Activated T-helper 1 cell treated with anti-CD3 and anti-CD28 coated beads, Interleukin-12 subunit alpha, Interleukin-12 subunit beta, Interleukin-2, Interleukin-4 antibody, amounts not matched to agents 30 ng/mL and 10 ng/mL and 1 ng/mL, durations not matched to agents 14 hours and 24 hours and 36 hours (primary cell): ENCODE measurements at regions of chr7 and their contacts with region 1.

Region 1: DNA sequence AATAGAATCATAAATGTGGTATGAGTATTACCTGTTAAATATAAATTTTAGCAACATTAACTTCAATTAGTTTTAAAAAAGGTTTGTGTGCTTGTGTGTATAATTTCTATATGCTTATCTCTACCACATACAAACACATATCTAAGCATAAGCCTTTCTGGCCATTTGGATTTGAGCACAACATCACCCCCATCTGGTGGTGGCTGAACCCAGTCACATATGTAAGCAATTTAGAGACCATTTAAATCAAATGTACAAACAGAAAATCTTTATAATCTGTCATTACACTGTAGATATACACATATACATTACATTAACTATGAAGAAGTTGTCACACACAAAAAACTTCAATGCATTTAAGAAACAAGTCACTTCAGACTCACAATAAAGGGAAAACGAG is 31.7 kb downstream of the GPR22 start:
- DNase-seq: no peak
- H3K4me3 Mint-ChIP-seq: no peak overlapping the region
- H3K27ac Mint-ChIP-seq: no peak overlapping the region
- H3K4me1 Mint-ChIP-seq: peaks cover 9% of the 10 kb centered on the region
- H3K27me3 Mint-ChIP-seq: no peaks in the 10 kb centered on the region

Region 2: GRCh38 chr7:107201795-107202450 is 299.7 kb before region 1 on chr7:
- intact Hi-C with region 1: loop called (anchors 1 kb)
- DNase-seq: no peak
- H3K4me3 Mint-ChIP-seq: no peak overlapping the region
- H3K27ac Mint-ChIP-seq: no peak overlapping the region
- H3K4me1 Mint-ChIP-seq: no peaks in the 10 kb centered on the region
- H3K27me3 Mint-ChIP-seq: no peaks in the 10 kb centered on the region

Region 3: DNA sequence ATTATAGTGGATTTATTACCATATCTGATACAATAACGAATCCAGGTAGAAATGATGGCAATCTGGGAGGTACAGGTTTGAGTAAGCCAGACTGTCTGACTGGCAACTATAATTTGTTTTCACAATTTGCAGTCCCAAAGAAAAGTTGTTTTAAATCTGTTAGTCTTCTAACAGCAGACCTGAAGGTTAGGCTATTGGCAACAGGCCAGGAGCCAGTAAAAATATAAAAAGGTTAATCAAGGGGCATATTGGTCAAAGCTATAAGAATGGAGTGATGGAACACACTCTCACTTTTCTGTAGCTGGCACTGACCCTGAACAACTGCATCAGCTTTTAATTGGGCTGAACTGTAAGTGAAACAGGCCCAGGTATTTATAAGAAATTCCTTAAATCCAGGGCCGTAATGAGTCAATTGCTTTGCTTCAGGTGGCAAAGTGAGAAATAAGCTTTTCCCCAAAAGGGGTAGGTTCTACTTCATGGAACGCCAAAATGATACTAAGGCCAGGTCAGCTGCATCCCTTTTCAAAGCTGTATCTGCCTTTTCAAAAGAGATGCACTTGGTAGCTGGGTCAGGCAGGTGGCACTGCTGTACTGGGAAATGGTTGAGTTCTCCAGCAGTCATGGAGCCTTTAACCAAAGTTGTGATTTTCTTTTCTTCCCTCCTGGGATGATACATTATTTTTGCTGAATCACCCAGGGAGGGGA is 38.7 kb before region 1 on chr7:
- intact Hi-C with region 1: loop called (anchors 1 kb)
- DNase-seq: peak; percentile 7
- H3K4me3 Mint-ChIP-seq: no peak overlapping the region
- H3K27ac Mint-ChIP-seq: no peak overlapping the region
- H3K4me1 Mint-ChIP-seq: no peaks in the 10 kb centered on the region
- H3K27me3 Mint-ChIP-seq: no peaks in the 10 kb centered on the region